ENCODE measurements at regions of chr2 and their contacts with region 1.

Region 1: DNA sequence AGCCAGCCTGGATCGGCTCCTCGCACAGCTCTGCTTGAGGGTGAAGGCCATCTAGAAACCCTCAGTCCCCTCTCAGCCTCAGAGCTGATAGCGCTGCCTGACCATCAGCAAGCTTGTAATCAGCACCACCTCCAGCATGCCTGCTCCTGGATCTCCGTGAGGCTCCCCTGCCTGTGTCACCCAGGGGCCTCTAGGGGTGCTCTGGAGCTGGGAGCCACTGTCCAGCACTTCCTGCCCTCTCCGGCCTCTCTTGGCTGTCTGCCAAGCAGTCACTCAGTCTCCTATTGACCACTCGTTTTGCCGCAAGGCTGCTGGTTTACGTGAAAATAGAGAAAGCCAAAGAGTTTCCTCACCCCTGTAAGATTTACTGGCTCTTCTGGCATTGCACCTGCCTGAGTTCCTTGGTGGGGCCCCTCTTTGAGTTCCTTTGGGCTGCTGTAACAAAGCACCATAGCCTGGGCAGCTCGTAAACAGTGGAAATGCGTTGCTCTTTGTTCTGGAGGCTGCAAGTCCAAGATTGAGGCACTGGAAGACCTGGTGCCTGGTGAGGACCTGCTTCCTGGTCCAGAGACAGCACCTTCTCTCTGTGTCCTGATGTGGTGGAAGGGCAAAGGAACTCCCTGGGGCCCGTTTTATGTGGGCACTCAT is 17.9 kb downstream of the CAPN10 start:
- H3K4me3 Mint-ChIP-seq: peak overlapping the region; percentile 7
- H3K27ac Mint-ChIP-seq: peak overlapping the region; percentile 31
- H3K4me1 Mint-ChIP-seq: peaks cover 30% of the 10 kb centered on the region
- H3K27me3 Mint-ChIP-seq: no peaks in the 10 kb centered on the region

Region 2: DNA sequence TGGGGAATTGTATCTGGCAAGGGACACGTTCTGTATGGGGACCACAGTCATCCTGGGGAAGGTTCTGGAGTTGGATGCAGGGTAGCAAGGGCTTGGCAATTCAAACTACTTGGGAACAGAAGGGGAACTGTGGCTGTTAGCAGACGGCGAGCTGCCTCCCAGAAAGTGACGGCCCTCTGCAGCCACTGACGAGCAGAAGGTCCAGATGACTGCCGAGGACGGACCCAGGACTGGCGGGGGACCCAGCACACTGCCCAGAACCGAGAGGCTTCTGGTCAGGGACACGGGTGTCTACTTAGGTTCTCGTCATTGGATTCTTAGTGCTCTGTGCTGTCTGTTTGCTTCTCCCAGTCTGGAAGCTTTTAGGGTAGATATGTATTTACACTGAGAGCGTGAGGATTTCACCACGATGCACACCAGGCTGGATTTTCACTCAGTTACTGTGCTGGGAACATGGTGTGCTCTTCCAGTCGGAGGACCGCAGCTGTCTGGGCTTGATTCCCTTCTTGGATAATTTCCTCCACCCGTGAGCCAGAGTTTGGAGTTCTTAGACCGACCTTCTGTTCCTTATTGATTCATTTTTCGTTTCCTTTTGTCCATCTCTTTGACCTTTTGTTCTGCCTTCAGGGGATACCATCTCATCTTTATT is 34.2 kb after region 1 on chr2:
- intact Hi-C with region 1: loop called (anchors 5 kb)
- H3K4me3 Mint-ChIP-seq: no peak overlapping the region
- H3K27ac Mint-ChIP-seq: no peak overlapping the region
- H3K4me1 Mint-ChIP-seq: peaks cover 32% of the 10 kb centered on the region
- H3K27me3 Mint-ChIP-seq: peaks cover 15% of the 10 kb centered on the region

Measured in dendritic cell treated with granulocyte-macrophage colony-stimulating factor and Interleukin-4, amounts not matched to agents 40 ng/mL and 50 ng/mL, for 4 days (primary cell).